ENCODE measurements at regions of chr1 and their contacts with region 1.

Region 1: GRCh38 chr1:172818841-172819527 is 160.1 kb downstream of the FASLG start:
- DNase-seq: peak; percentile 94
- ATAC-seq: peak; percentile 77
- H3K4me3 ChIP-seq: peak overlapping the region in 4 of 5 experiments; percentile 4 to 37 (median 17)
- H3K4me3 Mint-ChIP-seq: peak overlapping the region; percentile 77
- H3K27ac ChIP-seq: peak overlapping the region; percentile 84 to 93
- H3K27ac Mint-ChIP-seq: peak overlapping the region; percentile 93
- H3K4me1 ChIP-seq: peaks cover 26 to 35% of the 10 kb centered on the region in 2 donors
- H3K4me1 Mint-ChIP-seq: peaks cover 41% of the 10 kb centered on the region
- H3K27me3 ChIP-seq: no peaks in the 10 kb centered on the region
- H3K27me3 Mint-ChIP-seq: no peaks in the 10 kb centered on the region
- CTCF ChIP-seq: no peak

Region 2: GRCh38 chr1:172753964-172754363 is 65.0 kb before region 1 on chr1:
- CTCF ChIA-PET with region 1: interaction called, 4 read pairs
- POLR2A ChIA-PET with region 1: interaction called, 8 read pairs
- intact Hi-C with region 1: loop called (anchors 2 kb)
- DNase-seq: no peak
- ATAC-seq: no peak
- H3K4me3 ChIP-seq: no peak overlapping the region
- H3K4me3 Mint-ChIP-seq: no peak overlapping the region
- H3K27ac ChIP-seq: no peak overlapping the region
- H3K27ac Mint-ChIP-seq: no peak overlapping the region
- H3K4me1 ChIP-seq: peaks cover 17 to 20% of the 10 kb centered on the region in 2 donors
- H3K4me1 Mint-ChIP-seq: peaks cover 21% of the 10 kb centered on the region
- H3K27me3 ChIP-seq: peaks cover 0 to 6% (median 5%) of the 10 kb centered on the region in 4 experiments
- H3K27me3 Mint-ChIP-seq: peaks cover 10% of the 10 kb centered on the region
- CTCF ChIP-seq: no peak

Region 3: DNA sequence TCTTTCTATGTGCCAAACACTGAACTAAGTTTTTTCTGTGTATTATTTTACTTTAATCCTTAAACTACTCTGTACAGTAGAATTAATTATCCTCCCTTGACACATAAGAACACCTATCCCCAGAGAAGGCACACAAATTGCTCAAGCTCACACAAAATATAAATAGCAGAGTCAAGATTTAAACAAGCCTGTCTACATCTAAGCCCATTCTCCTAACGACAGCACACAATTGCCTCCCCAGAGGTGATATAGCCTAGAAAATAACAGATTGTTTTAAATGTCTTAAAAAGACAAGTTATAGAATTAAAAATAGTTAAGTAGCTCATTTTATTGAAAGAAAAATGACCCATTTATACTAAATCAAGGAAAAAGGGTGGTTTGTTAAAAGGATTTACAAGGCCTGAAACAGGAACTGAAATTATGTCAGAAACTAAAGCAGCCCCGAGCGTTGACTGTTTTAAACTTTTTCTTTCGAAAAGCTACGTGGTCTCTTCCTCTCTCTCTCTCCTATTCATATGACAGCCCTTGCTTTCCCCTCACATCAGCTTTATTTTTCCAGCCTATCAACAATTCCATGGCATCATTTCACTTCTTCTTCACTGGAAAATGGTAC is 201.3 kb after region 1 on chr1:
- CTCF ChIA-PET with region 1: interaction called, 3 read pairs
- POLR2A ChIA-PET with region 1: no interaction called
- intact Hi-C with region 1: loop called (anchors 2 kb)
- DNase-seq: peak; percentile 70
- ATAC-seq: peak; percentile 75
- H3K4me3 ChIP-seq: peak overlapping the region in 1 of 5 experiments; percentile 21
- H3K4me3 Mint-ChIP-seq: peak overlapping the region; percentile 75
- H3K27ac ChIP-seq: peak overlapping the region; percentile 84 to 92
- H3K27ac Mint-ChIP-seq: peak overlapping the region; percentile 94
- H3K4me1 ChIP-seq: peaks cover 56 to 62% of the 10 kb centered on the region in 2 donors
- H3K4me1 Mint-ChIP-seq: peaks cover 57% of the 10 kb centered on the region
- H3K27me3 ChIP-seq: no peaks in the 10 kb centered on the region
- H3K27me3 Mint-ChIP-seq: no peaks in the 10 kb centered on the region
- CTCF ChIP-seq: no peak

Region 4: GRCh38 chr1:173220157-173220556 is 401.2 kb after region 1 on chr1:
- CTCF ChIA-PET with region 1: no interaction called
- POLR2A ChIA-PET with region 1: no interaction called
- intact Hi-C with region 1: no loop called
- DNase-seq: no peak
- ATAC-seq: no peak
- H3K4me3 ChIP-seq: no peak overlapping the region
- H3K4me3 Mint-ChIP-seq: no peak overlapping the region
- H3K27ac ChIP-seq: no peak overlapping the region
- H3K27ac Mint-ChIP-seq: no peak overlapping the region
- H3K4me1 ChIP-seq: peaks cover 0 to 4% of the 10 kb centered on the region in 2 donors
- H3K4me1 Mint-ChIP-seq: peaks cover under 1% of the 10 kb centered on the region
- H3K27me3 ChIP-seq: no peaks in the 10 kb centered on the region
- H3K27me3 Mint-ChIP-seq: no peaks in the 10 kb centered on the region
- CTCF ChIP-seq: no peak

Region 5: DNA sequence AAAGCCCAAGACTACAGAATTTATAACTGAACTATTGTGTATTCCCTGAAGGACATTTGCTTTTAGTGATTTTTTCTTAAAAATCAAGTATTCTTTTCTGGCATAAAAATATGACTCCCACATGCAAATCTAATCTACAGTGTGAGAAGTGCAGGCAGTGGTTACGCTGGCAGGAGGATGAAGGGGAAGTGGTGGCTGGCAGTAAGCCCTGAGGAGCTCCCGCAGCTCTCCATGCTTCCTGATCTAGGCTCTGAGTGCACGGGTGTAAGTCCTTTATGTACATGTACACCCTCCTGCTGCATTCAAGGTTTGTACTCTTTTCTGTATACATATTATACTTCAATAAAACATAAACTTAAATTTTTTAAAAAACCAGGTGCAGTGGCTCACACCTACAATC is 590.6 kb after region 1 on chr1:
- CTCF ChIA-PET with region 1: interaction called, 10 read pairs
- POLR2A ChIA-PET with region 1: interaction called, 12 read pairs
- intact Hi-C with region 1: loop called (anchors 2 kb)
- DNase-seq: peak; percentile 73
- ATAC-seq: peak; percentile 22
- H3K4me3 ChIP-seq: no peak overlapping the region
- H3K4me3 Mint-ChIP-seq: peak overlapping the region; percentile 64
- H3K27ac ChIP-seq: peak overlapping the region; percentile 89 to 97
- H3K27ac Mint-ChIP-seq: peak overlapping the region; percentile 87
- H3K4me1 ChIP-seq: peaks cover 76 to 88% of the 10 kb centered on the region in 2 donors
- H3K4me1 Mint-ChIP-seq: peaks cover 79% of the 10 kb centered on the region
- H3K27me3 ChIP-seq: no peaks in the 10 kb centered on the region
- H3K27me3 Mint-ChIP-seq: no peaks in the 10 kb centered on the region
- CTCF ChIP-seq: no peak

Region 6: DNA sequence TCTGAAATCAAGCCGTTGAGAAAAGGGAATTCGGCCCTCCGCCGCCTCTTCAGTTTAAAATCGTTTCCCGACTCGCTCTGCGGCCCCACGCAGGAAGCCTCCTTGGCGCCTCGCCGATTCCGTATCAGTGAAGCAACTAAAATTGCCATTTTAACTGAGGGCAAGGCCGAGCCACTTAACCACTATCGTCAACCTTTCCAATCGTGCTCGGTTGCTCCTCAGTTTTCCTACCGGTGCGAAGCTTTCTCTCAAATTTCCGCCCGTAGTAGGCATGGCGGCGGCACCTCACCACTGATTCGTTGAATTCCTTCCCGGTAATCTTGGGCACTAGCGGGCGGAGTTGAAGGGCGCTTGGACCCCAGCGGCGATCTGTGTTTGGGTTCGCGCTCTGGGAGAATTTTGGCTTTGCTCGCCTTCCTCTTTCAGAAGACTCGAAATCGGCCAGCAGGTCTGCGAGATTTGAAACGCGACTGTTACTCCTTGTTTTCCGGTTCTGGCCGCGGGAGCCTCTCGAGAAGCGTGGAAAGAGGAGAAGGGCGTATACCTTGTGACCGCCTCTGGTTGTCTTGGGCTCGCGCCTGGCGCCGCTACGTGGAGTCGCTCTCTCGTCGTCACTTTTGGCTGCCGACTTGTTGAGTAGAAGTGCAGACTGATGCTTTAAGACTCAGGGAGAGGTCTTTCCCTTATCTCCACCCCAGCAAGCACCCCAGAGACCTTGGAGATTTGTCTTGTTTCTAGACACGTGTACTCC is 1005.5 kb after region 1 on chr1 and contains the starts of genes CENPL and DARS2:
- CTCF ChIA-PET with region 1: interaction called, 3 read pairs
- POLR2A ChIA-PET with region 1: no interaction called
- intact Hi-C with region 1: loop called (anchors 1 kb)
- DNase-seq: peak; percentile 94
- ATAC-seq: peak; percentile 89
- H3K4me3 ChIP-seq: peak within 1 kb of the TSS; percentile 78 to 100 (median 93)
- H3K4me3 Mint-ChIP-seq: peak within 1 kb of the TSS; percentile 92
- H3K27ac ChIP-seq: peak within 1 kb of the TSS; percentile 77 to 87
- H3K27ac Mint-ChIP-seq: peak within 1 kb of the TSS; percentile 95
- H3K4me1 ChIP-seq: peaks cover 8 to 18% of the 10 kb centered on the region in 2 donors
- H3K4me1 Mint-ChIP-seq: peaks cover 21% of the 10 kb centered on the region
- H3K27me3 ChIP-seq: no peaks in the 10 kb centered on the region
- H3K27me3 Mint-ChIP-seq: no peaks in the 10 kb centered on the region
- CTCF ChIP-seq: no peak
- total RNA-seq, gene CENPL: 9.7 and 14.4 TPM in 2 replicates
- total RNA-seq, gene DARS2: 17.0 and 17.3 TPM in 2 replicates